Endothelial cell of umbilical vein (primary cell): ENCODE measurements at regions of chr10 and their contacts with region 1.

Region 1: DNA sequence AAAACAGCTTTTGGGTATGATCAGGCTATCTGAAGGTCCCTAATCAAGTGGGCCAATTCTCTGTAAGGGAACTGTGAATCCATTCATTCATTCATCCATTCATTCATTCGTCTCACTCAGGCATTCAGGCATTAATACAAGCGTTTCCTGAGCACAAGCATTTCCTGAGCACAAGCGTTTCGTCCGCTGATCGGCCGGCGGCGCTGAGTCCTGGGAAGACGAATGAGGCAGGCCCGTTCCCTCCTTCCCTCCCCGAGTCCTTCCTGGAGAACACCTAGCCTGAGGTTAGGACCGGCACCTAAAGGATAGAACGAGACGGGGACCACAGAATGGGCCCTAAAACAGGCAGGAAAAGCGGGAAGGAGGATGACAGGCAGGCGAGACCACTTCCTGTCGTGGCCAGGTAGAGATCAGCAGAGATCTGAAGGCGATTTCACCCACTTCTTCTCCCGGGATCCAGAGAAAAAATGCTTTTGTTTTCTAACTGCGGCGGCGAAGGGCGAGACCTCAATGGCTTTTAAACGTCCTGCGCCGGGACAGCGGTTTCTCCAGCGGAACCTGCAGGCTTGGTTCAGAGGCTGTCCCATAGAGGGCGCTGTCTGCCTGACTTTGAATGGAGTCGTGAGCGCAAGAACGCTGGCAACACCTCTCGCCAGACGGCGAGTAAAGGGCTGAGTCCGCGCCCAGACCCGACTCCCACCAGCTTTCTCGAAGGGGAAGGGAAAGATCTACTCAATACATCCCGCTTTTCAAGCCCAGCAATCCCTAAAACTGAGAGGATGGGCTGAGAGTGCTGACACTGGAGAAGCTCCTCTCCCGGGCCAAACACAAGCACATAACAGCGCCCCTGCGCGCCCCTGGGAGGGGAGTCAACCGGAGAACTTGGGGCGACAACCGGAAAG is 2.9 kb upstream of the HMX3 start:
- DNase-seq: peak; percentile 79
- H3K4me3 ChIP-seq: peak overlapping the region in 2 of 3 experiments; percentile 5 to 12
- H3K27ac ChIP-seq: no peak overlapping the region
- H3K4me1 ChIP-seq: peaks cover 10% of the 10 kb centered on the region
- H3K27me3 ChIP-seq: peaks cover 74 to 77% of the 10 kb centered on the region in 2 experiments
- CTCF ChIP-seq: peak; percentile 90 to 92
- POLR2A ChIP-seq: no peak

Region 2: GRCh38 chr10:122822973-122823690 is 309.7 kb before region 1 on chr10:
- CTCF ChIA-PET with region 1: no interaction called
- POLR2A ChIA-PET with region 1: no interaction called
- dilution Hi-C with region 1: no loop called
- intact Hi-C with region 1: no loop called
- DNase-seq: no peak
- H3K4me3 ChIP-seq: no peak overlapping the region
- H3K27ac ChIP-seq: no peak overlapping the region
- H3K4me1 ChIP-seq: no peaks in the 10 kb centered on the region
- H3K27me3 ChIP-seq: peaks cover 2 to 23% of the 10 kb centered on the region in 2 experiments
- CTCF ChIP-seq: no peak
- POLR2A ChIP-seq: no peak

Region 3: DNA sequence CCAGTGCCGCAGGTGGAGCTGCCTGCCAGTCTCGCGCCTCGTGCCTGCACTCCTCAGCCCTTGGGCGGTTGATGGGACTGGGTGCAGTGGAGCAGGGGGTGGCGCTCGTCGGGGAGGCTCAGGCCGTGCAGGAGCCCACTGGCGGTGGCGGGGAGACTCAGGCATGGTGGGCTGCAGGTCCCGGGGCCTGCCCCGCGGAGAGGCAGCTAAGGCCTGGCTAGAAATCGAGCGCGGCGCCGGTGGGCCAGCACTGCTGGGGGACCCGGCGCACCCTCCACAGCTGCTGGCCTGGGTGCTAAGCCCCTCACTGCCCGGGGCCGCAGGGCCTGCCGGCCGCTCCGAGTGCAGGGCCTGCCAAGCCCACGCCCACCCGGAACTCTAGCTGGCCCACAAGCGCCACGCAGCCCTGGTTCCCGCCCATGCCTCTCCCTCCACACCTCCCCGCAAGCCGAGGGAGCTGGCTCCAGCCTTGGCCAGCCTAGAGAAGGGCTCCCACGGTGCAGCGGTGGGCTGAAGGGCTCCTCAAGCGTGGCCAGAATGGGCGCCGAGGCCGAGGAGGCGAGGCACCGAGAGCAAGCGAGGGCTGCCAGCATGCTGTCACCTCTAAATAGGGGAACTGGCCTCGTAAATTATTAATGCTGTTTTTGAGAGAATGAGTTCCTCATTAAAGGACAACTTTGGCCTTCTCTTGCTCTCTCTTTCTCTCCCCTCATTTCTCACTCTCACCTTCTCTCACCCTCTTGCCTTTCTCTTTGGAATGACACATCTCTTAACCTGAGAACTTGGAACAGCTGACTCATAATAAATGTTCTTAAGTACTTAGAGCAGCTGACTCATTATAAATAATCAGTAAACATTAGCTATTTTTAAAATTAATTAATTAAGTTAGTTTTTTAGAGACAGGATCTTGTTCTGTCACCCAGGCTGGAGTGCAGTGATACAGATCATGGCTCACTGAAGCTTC is 119.1 kb before region 1 on chr10:
- CTCF ChIA-PET with region 1: no interaction called
- POLR2A ChIA-PET with region 1: no interaction called
- dilution Hi-C with region 1: no loop called
- intact Hi-C with region 1: no loop called
- DNase-seq: no peak
- H3K4me3 ChIP-seq: no peak overlapping the region
- H3K27ac ChIP-seq: no peak overlapping the region
- H3K4me1 ChIP-seq: peaks cover 7% of the 10 kb centered on the region
- H3K27me3 ChIP-seq: no peaks in the 10 kb centered on the region
- CTCF ChIP-seq: no peak
- POLR2A ChIP-seq: no peak

Region 4: GRCh38 chr10:123043409-123043925 is 89.4 kb before region 1 on chr10:
- CTCF ChIA-PET with region 1: interaction called, 4 read pairs
- POLR2A ChIA-PET with region 1: no interaction called
- dilution Hi-C with region 1: no loop called
- intact Hi-C with region 1: loop called (anchors 1 kb)
- DNase-seq: peak; percentile 61
- H3K4me3 ChIP-seq: no peak overlapping the region
- H3K27ac ChIP-seq: no peak overlapping the region
- H3K4me1 ChIP-seq: no peaks in the 10 kb centered on the region
- H3K27me3 ChIP-seq: no peaks in the 10 kb centered on the region
- CTCF ChIP-seq: peak; percentile 59 to 76
- POLR2A ChIP-seq: no peak

Region 5: DNA sequence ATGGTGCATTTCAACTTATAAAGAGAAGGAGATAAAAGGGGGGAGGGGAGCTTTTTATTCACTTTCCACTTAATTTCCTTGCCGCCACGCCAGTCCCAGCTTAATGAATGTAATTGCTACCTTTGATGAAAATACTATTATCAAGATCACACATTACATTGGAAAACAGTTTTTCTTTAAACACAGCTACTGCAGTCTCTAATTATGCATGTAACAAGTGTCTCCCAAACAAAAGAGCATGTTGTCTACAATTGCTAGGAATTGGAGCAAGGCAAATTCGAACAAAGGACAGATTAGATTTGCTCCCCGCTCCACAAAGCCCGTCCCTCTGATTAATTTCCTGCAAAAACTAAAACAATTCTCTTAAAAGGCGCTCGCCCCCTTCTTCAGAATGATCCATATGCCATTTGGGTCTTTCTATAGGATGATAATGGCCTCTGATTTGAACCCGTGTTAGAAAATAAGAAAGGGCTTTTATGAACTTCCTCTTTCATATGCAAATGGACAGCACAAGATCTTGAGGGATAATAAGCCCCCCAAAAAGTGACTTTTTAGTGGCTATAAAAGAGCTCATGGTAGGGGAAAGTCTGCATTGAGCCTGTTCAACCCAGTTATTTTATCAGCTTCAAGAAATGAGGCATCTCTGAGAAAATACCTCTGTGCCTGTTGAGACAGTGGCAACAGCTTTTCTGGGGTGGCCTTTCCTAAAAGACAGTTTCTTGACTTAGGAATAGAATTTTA is 63.4 kb before region 1 on chr10:
- CTCF ChIA-PET with region 1: no interaction called
- POLR2A ChIA-PET with region 1: no interaction called
- dilution Hi-C with region 1: no loop called
- intact Hi-C with region 1: no loop called
- DNase-seq: no peak
- H3K4me3 ChIP-seq: no peak overlapping the region
- H3K27ac ChIP-seq: no peak overlapping the region
- H3K4me1 ChIP-seq: no peaks in the 10 kb centered on the region
- H3K27me3 ChIP-seq: no peaks in the 10 kb centered on the region
- CTCF ChIP-seq: no peak
- POLR2A ChIP-seq: no peak

Region 6: DNA sequence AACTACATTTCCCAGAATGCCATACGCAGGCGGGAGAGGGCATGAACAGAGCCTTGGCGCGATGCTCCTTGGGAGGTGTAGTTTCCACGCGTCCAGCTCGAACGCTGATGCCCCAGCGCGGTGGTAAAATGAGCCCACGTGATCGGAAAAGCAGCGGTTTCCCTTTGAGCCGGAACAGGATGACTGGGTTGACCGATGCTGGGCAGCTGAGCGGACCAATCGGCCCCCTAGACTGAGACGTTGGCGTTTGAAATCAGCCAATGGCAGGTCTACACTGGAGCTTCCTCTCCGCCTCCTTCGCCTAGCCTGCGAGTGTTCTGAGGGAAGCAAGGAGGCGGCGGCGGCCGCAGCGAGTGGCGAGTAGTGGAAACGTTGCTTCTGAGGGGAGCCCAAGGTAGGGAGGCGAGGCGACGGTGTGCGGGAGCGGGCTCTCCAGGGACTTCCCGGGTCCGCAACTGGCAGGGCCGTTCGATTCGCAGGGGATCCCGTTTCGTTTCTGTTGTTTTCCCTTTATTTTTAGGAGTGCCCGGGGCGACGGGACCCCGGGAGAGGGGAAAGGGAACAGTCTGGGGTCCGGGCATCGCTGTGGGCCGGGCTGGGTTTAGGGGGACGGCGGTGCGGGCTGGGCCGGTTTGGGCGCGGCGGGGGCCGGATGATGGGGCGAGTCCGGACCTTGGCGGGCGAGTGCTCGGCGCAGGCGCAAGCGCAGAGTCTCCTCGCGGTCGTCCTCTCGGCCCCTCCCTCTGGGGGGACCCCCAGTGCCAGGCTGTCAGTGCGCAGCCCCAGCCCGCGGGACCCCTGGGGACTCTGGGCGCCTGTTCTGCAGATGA is 21.5 kb after region 1 on chr10 and contains the start of gene BUB3:
- CTCF ChIA-PET with region 1: interaction called, 20 read pairs
- POLR2A ChIA-PET with region 1: no interaction called
- dilution Hi-C with region 1: no loop called
- intact Hi-C with region 1: loop called (anchors 1 kb)
- DNase-seq: peak; percentile 100
- H3K4me3 ChIP-seq: peak within 1 kb of the TSS; percentile 61 to 92 (median 90)
- H3K27ac ChIP-seq: peak within 1 kb of the TSS; percentile 81
- H3K4me1 ChIP-seq: peaks cover 48% of the 10 kb centered on the region
- H3K27me3 ChIP-seq: peaks cover 35 to 41% of the 10 kb centered on the region in 2 experiments
- CTCF ChIP-seq: no peak
- POLR2A ChIP-seq: peak; percentile 91
- total RNA-seq, gene BUB3: 178 and 193 TPM in 2 replicates

Region 7: GRCh38 chr10:123380497-123381085 is 247.8 kb after region 1 on chr10:
- CTCF ChIA-PET with region 1: no interaction called
- POLR2A ChIA-PET with region 1: no interaction called
- dilution Hi-C with region 1: no loop called
- intact Hi-C with region 1: loop called (anchors 1 kb)
- DNase-seq: no peak
- H3K4me3 ChIP-seq: no peak overlapping the region
- H3K27ac ChIP-seq: no peak overlapping the region
- H3K4me1 ChIP-seq: no peaks in the 10 kb centered on the region
- H3K27me3 ChIP-seq: no peaks in the 10 kb centered on the region
- CTCF ChIP-seq: no peak
- POLR2A ChIP-seq: no peak

Region 8: DNA sequence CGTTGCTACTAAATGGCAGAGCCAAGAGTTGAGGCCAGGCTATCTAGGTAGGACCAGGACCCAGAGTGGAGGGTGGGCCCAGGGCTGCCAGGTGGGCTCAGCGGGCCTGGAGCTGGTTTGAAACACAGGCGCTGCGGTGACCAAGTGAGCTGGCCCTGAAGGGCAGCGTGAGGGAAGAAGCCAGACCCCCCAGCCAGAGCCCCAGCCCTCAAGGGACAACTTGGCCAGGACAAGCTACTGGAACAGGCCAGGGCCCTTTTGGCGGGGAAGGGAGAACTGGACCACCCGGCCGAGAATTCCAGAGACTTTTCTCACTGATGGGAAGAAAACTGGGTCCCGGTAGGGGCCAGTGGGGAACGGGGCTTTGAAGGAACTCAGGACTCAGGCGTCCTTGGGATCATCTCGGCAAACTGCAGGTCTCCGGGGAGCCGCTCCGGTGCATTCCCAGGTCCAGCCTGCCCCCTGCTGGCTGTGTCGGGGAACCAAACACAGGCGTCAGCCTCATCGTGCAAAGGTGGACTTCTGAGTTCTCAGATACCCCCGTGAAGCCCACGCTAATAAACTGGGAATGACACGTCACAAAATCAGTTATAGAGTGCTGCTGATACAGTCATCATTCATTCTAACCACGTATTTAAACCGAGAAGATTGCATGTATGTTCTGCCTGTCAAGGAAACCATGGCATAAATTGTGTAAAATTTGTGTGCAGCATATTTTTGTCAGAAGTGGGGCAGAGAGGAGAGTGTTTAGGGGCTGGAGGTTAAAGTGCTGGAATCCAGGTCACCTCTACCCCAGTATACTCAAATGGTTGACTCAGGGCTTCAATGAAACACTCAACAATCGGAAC is 834.8 kb after region 1 on chr10:
- CTCF ChIA-PET with region 1: no interaction called
- POLR2A ChIA-PET with region 1: no interaction called
- dilution Hi-C with region 1: no loop called
- intact Hi-C with region 1: loop called (anchors 5 kb)
- DNase-seq: peak; percentile 57
- H3K4me3 ChIP-seq: no peak overlapping the region
- H3K27ac ChIP-seq: no peak overlapping the region
- H3K4me1 ChIP-seq: no peaks in the 10 kb centered on the region
- H3K27me3 ChIP-seq: peaks cover 0 to 2% of the 10 kb centered on the region in 2 experiments
- CTCF ChIP-seq: peak; percentile 87 to 92
- POLR2A ChIP-seq: no peak